ENCODE measurements at regions of chr12 and their contacts with region 1.

Region 1: DNA sequence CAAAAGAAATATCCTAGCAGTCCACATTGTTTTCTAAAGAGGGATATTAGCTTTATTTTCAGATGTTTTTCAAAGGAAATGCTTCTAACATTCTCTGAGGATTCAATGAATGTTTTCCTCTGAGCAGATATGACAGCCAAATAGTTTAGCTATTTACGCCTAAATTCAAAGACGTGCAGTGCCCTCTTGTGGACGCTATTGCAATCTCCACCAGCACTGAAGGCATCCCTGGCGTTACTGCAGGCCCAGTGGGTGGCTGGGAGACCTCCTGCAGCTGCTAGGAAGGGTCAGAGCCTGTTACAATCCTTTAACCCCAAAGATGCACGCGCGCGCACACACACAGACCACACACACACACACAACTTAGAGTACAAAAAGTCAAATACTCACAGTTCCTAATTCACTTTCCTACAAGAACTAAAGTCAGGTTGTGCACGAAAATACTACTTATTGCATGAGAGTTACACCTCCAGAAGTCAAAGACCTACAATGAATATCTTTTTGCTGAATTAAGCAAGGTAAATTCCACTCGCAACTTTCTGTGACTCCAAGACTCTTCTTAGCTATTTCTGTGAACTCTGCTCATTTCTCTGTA is 589.3 kb upstream of the TMEM132C start:
- ATAC-seq: peak; percentile 47 to 99 (median 84)
- H3K4me3 ChIP-seq: no peak overlapping the region
- H3K27ac ChIP-seq: no peak overlapping the region
- H3K4me1 ChIP-seq: no peaks in the 10 kb centered on the region

Region 2: DNA sequence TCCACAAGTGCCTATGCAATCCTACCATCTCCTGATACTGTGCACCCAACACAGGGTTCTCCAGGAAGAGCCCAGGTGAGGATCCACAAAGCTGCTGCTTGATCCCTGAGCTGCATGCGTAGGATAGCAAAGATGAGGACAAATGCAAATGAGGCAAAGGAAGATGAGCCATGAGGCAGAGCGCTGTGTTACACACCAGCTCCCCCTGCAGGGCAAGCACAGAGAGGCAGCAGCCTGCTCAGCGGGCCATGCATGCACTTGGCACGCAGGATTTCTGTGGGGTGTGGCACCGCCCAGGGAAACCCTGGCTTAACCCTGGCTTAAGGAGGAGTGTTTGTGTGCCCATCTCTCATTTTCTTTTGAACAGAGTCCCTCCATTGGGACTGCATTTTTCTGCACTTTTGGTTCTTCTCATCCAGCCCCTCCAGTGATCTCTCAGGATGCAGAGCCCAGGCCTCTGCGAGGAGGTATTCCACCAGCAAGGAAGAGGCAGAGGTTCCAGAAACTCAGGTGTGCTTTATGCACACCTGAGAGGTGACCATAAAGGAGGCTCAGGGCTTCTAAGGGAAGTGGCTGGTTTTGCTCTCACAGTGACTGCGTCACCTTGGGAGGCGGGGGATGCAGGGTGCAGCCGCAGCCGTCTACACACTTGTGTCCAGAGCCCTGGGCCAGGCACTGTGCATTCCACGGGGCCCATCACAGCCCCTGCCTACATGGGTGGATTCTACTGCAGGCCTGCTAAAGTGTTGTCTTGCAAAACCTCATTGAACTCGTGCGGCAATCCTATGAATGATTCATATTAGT is 383.9 kb before region 1 on chr12:
- in situ Hi-C with region 1: no loop called
- ATAC-seq: peak in 5 of 8 experiments; percentile 61 to 99 (median 99)
- H3K4me3 ChIP-seq: no peak overlapping the region
- H3K27ac ChIP-seq: no peak overlapping the region
- H3K4me1 ChIP-seq: no peaks in the 10 kb centered on the region

Region 3: GRCh38 chr12:127485528-127485927 is 192.1 kb before region 1 on chr12:
- in situ Hi-C with region 1: loop called in 1 of 9 experiments (anchors 10 kb)
- ATAC-seq: peak in 3 of 8 experiments; percentile 74 to 97 (median 94)
- H3K4me3 ChIP-seq: no peak overlapping the region
- H3K27ac ChIP-seq: no peak overlapping the region
- H3K4me1 ChIP-seq: no peaks in the 10 kb centered on the region

Region 4: DNA sequence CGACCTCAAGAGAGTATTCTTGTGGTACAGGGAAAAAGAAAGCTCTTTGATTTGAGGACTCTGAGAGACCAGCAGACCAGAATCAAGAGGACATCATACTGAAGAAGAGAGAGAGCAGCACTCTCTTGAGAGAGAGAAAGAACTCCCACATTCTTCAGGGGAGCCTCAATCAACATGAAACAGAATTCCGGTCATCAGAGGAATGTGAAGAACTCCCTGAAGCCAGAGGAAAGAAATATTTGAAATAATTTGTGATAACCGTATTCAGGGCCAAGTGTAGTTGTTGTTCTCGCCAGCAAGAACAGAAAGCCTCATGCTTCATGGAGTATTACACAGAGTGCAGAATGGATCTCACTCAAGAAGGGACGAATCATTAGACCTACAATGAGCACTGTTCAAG is 225.5 kb after region 1 on chr12:
- in situ Hi-C with region 1: loop called in 2 of 9 experiments (anchors 25 kb)
- ATAC-seq: peak in 3 of 8 experiments; percentile 76 to 98 (median 95)
- H3K4me3 ChIP-seq: no peak overlapping the region
- H3K27ac ChIP-seq: no peak overlapping the region
- H3K4me1 ChIP-seq: no peaks in the 10 kb centered on the region